Activated CD4-positive, alpha-beta memory T cell treated with anti-CD3 and anti-CD28 coated beads for 36 hours (primary cell): ENCODE measurements at regions of chr13 and their contacts with region 1.

Region 1: DNA sequence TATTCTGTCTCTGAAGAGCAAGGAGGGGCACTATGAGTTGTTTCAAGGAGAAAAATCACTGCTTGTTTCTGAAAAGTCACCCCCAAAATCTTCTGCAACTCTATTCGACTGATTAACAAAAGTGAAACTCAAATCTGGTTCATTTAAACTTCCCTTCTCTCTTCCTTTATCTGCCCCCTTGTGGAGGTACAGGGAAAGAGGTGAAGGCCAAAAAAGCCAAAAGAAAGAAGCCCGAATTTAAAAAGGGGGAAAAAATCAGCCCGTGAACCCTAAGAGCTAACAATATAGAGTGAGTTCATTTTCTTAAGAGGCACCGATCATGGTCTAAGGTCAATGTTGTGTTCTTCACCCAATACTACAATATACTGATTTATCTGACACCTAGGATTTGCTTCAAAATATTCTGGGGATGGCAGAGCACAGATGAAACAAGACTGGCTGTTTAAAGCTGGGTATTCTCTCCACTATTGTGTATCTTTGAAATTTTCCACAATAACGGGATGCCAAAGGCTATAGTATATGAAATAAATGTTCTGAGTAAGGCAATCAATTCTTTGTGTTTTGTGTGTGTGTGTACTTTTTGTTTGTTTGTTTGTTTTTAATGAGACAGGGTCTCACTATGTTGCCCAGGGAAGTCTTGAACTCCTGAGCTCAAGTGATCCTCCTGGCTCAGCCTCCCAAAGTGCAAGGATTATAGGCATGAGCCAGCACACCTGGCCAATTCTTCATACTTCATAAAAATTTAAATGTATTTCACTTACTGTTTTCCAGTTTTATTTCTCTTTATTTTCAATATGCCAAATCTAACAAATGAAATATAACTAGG is 55.0 kb upstream of the EEF1AKMT1 start:
- DNase-seq: peak; percentile 13
- H3K4me3 Mint-ChIP-seq: no peak overlapping the region
- H3K27ac Mint-ChIP-seq: peak overlapping the region; percentile 5
- H3K4me1 Mint-ChIP-seq: peaks cover 11% of the 10 kb centered on the region
- H3K27me3 Mint-ChIP-seq: no peaks in the 10 kb centered on the region

Region 2: DNA sequence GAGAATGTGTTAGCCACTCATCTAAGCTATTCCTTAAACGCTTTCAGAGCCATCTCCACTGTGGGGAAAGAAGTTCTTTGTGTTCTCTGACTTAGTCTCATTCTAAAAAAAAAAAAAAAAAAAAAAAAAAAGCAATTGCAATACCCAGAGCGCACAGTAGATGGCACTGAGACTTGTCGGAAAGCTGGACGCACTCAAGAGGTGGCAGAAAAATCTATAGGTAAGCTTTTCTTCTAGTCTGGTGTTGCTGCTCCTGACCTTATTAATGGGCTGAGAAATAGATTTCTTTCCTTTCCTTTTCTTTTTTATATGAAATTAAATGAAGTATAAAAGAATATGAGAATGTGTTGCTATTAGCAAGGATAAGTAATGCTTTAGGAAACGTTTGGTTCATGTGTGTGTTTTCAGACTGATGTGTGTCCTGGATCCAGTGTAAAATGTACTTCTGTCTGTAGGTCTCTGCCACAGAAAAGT is 631.4 kb before region 1 on chr13:
- CTCF ChIA-PET with region 1: interaction called, 13 read pairs
- POLR2A ChIA-PET with region 1: no interaction called
- intact Hi-C with region 1: no loop called
- DNase-seq: no peak
- H3K4me3 Mint-ChIP-seq: peak overlapping the region; percentile 7
- H3K27ac Mint-ChIP-seq: no peak overlapping the region
- H3K4me1 Mint-ChIP-seq: peaks cover 17% of the 10 kb centered on the region
- H3K27me3 Mint-ChIP-seq: peaks cover 36% of the 10 kb centered on the region

Region 3: GRCh38 chr13:20369886-20370361 is 458.8 kb before region 1 on chr13:
- CTCF ChIA-PET with region 1: no interaction called
- POLR2A ChIA-PET with region 1: no interaction called
- intact Hi-C with region 1: no loop called
- DNase-seq: no peak
- H3K4me3 Mint-ChIP-seq: no peak overlapping the region
- H3K27ac Mint-ChIP-seq: peak overlapping the region; percentile 23
- H3K4me1 Mint-ChIP-seq: peaks cover 8% of the 10 kb centered on the region
- H3K27me3 Mint-ChIP-seq: peaks cover 12% of the 10 kb centered on the region

Region 4: GRCh38 chr13:20713751-20714150 is 115.0 kb before region 1 on chr13:
- CTCF ChIA-PET with region 1: interaction called, 7 read pairs
- POLR2A ChIA-PET with region 1: no interaction called
- intact Hi-C with region 1: loop called (anchors 1 kb)
- DNase-seq: no peak
- H3K4me3 Mint-ChIP-seq: no peak overlapping the region
- H3K27ac Mint-ChIP-seq: no peak overlapping the region
- H3K4me1 Mint-ChIP-seq: peaks cover 6% of the 10 kb centered on the region
- H3K27me3 Mint-ChIP-seq: peaks cover 10% of the 10 kb centered on the region

Region 5: GRCh38 chr13:20814224-20814910 is 14.4 kb before region 1 on chr13:
- CTCF ChIA-PET with region 1: interaction called, 15 read pairs
- POLR2A ChIA-PET with region 1: no interaction called
- intact Hi-C with region 1: no loop called
- DNase-seq: no peak
- H3K4me3 Mint-ChIP-seq: no peak overlapping the region
- H3K27ac Mint-ChIP-seq: no peak overlapping the region
- H3K4me1 Mint-ChIP-seq: no peaks in the 10 kb centered on the region
- H3K27me3 Mint-ChIP-seq: no peaks in the 10 kb centered on the region

Region 6: GRCh38 chr13:20902438-20903163 is 73.8 kb after region 1 on chr13 and contains the start of gene XPO4:
- CTCF ChIA-PET with region 1: interaction called, 10 read pairs
- POLR2A ChIA-PET with region 1: no interaction called
- intact Hi-C with region 1: no loop called
- DNase-seq: peak; percentile 87
- H3K4me3 Mint-ChIP-seq: peak within 1 kb of the TSS; percentile 95
- H3K27ac Mint-ChIP-seq: peak within 1 kb of the TSS; percentile 87
- H3K4me1 Mint-ChIP-seq: peaks cover 33% of the 10 kb centered on the region
- H3K27me3 Mint-ChIP-seq: no peaks in the 10 kb centered on the region
- total RNA-seq, gene XPO4: 24.8 to 25.1 TPM